SK-N-SH (cell line): ENCODE measurements at regions of chr10 and their contacts with region 1.

Region 1: DNA sequence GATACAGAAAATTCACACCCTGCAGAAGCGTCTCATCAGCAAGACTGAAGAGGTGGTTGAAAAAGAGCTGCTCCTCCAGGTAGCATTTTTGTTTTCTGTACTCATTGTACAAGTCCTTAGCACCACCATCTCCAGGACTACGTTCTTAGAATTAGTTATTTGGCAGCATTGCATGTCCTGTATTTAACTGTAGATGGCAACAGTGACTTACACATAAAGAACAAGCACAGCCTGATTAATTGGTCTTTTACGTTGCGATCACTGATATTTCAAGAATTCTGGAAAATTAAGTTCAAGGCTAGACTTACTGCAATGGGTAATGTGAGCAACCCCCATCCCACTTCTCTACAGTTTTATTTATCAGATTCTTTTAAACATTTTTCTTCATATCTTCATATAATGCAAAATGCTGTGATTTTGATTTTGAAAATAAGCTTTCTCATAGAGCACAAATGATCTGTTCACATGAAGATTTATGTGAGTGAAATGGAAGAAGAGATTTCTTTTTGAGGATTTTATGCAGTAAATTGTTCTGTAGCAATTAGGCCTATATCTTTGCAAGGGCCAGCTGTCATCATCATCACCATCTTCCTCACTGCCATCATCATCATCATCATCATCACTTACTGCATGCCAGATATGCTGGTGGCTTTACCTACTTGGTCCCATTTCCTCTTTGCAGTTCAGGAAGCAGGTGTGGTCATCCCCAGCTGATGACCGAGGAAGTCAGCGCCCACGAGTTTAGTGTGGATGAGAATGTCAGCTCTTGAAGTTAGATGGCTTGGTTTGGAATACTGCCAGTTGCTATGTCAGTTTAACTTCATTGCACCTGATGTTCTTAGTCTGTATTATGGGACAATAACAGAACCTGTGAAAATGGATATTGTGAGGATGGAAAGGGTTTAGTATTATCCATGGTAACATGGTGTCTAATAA is 53.4 kb downstream of the CFAP58 start:
- DNase-seq: peak; percentile 44
- H3K4me3 ChIP-seq: no peak overlapping the region; a peak in 1 of 4 replicates
- H3K27ac ChIP-seq: no peak overlapping the region
- H3K4me1 ChIP-seq: no peaks in the 10 kb centered on the region; a peak in 1 of 4 replicates
- H3K27me3 ChIP-seq: no peaks in the 10 kb centered on the region
- CTCF ChIP-seq: peak; percentile 84
- EP300 ChIP-seq: no peak
- RAD21 ChIP-seq: peak; percentile 93

Region 2: DNA sequence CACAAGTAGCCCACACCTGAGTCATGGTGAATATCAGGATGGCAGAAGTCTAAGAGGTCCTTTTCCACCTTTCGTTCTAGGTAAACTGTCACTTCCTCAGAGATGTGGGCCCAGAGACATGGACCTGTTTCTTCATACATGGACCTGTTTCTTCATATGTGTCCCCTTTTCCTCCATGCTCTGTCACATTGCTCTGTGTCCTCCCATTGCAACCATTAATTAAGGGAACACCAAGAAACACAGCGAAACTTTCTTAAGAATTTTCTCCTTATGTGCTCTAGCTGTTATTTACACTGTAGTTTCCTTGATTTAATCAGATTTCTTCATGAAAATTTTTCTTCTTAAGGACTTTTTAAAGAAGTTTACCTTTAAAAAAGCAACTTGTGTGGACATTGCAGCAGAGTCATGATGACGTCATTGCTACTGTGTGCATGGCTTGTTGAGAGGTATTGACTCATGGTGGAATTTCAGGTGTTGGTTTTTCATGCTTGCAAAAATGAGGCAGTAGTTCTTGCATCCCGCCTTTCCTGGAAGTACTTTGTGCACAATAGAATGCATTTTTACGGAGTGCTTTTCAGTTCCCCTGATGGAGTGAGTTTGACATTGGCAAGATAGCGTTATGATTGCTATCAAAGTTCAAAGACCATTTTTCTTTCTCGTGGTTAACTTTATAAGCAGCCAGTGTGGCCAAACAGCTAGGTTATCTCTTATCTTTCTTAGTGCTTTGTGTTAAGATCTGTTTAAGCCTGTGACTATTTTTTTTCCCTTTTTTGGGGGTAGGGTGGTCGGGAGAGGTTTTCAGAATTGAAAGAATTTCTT is 15.6 kb before region 1 on chr10:
- CTCF ChIA-PET with region 1: interaction called, 38 read pairs
- POLR2A ChIA-PET with region 1: no interaction called
- DNase-seq: no peak
- H3K4me3 ChIP-seq: no peak overlapping the region
- H3K27ac ChIP-seq: no peak overlapping the region
- H3K4me1 ChIP-seq: no peaks in the 10 kb centered on the region; a peak in 2 of 4 replicates
- H3K27me3 ChIP-seq: no peaks in the 10 kb centered on the region
- CTCF ChIP-seq: no peak
- EP300 ChIP-seq: no peak
- RAD21 ChIP-seq: no peak

Region 3: DNA sequence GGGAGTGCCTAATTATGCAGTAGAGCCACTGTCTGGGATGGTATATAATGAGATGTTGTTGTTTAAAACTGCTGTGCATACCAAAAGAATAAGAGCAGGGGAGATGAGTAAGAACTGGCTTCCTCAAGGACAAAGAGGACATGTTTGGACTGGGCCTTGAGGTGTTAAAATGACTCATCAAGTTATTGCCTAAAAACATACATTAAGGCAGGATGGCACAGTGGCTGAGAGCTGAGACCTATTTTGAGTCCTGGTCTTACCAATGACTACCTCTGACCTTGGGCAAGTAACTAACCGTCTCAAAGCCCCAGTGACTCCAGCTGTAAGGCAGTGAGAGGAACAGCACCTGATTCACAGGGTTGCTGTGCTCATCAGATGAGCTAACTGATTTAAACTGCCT is 17.7 kb after region 1 on chr10:
- CTCF ChIA-PET with region 1: interaction called, 17 read pairs
- POLR2A ChIA-PET with region 1: no interaction called
- DNase-seq: no peak
- H3K4me3 ChIP-seq: no peak overlapping the region
- H3K27ac ChIP-seq: no peak overlapping the region
- H3K4me1 ChIP-seq: no peaks in the 10 kb centered on the region
- H3K27me3 ChIP-seq: no peaks in the 10 kb centered on the region
- CTCF ChIP-seq: no peak
- EP300 ChIP-seq: no peak
- RAD21 ChIP-seq: no peak

Region 4: GRCh38 chr10:104509981-104510380 is 103.0 kb after region 1 on chr10:
- CTCF ChIA-PET with region 1: interaction called, 11 read pairs
- POLR2A ChIA-PET with region 1: no interaction called
- DNase-seq: no peak
- H3K4me3 ChIP-seq: no peak overlapping the region
- H3K27ac ChIP-seq: no peak overlapping the region
- H3K4me1 ChIP-seq: peaks cover 0 to 2% of the 10 kb centered on the region in 2 experiments; a peak in 1 of 4 replicates
- H3K27me3 ChIP-seq: no peaks in the 10 kb centered on the region
- CTCF ChIP-seq: no peak
- EP300 ChIP-seq: no peak
- RAD21 ChIP-seq: no peak

Region 5: GRCh38 chr10:104589871-104590270 is 182.9 kb after region 1 on chr10:
- CTCF ChIA-PET with region 1: interaction called, 12 read pairs
- POLR2A ChIA-PET with region 1: no interaction called
- DNase-seq: no peak
- H3K4me3 ChIP-seq: no peak overlapping the region
- H3K27ac ChIP-seq: peak overlapping the region in 1 of 2 experiments; percentile 83; a peak in 2 of 4 replicates
- H3K4me1 ChIP-seq: peaks cover 12 to 19% of the 10 kb centered on the region in 2 experiments; a peak in 3 of 4 replicates
- H3K27me3 ChIP-seq: no peaks in the 10 kb centered on the region
- CTCF ChIP-seq: no peak
- EP300 ChIP-seq: no peak; a peak in 1 of 4 replicates
- RAD21 ChIP-seq: no peak

Region 6: DNA sequence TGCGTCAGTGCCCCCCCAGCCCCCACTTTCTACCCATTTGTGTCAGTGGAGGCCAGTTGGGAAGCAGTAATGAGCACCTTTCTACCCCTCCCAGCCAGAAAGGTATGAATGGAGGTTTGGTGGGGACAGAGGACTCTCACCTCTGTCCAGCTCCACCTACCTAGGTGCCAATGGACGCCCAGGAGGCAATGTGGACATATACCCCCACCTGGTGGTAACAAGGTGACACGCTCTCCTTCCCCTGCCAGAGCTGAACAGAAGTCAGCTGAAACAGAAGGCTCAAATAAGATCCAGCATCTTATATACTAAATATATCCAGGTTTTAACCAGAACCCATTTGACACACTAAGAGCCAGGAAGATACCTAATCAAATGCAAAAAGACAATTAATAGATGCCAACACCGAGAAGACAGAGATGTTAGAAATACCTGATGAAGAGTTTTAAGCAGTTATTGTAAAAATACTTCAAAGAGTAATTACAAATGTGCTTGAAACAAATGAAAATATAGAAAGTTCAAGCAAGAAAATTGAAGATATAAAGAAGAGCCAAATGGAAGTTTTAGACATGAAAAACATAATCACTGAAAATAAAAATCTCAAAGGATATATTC is 215.7 kb after region 1 on chr10:
- CTCF ChIA-PET with region 1: interaction called, 83 read pairs
- POLR2A ChIA-PET with region 1: interaction called, 4 read pairs
- DNase-seq: peak; percentile 62
- H3K4me3 ChIP-seq: no peak overlapping the region
- H3K27ac ChIP-seq: no peak overlapping the region
- H3K4me1 ChIP-seq: no peaks in the 10 kb centered on the region
- H3K27me3 ChIP-seq: no peaks in the 10 kb centered on the region; the same call in 1 of the 2 replicates
- CTCF ChIP-seq: peak; percentile 58
- EP300 ChIP-seq: no peak
- RAD21 ChIP-seq: peak; percentile 82

Region 7: GRCh38 chr10:104925232-104925851 is 518.4 kb after region 1 on chr10:
- CTCF ChIA-PET with region 1: interaction called, 13 read pairs
- POLR2A ChIA-PET with region 1: no interaction called
- DNase-seq: peak; percentile 47
- H3K4me3 ChIP-seq: peak overlapping the region in 1 of 2 experiments; percentile 43; a peak in 1 of 4 replicates
- H3K27ac ChIP-seq: no peak overlapping the region
- H3K4me1 ChIP-seq: no peaks in the 10 kb centered on the region
- H3K27me3 ChIP-seq: no peaks in the 10 kb centered on the region
- CTCF ChIP-seq: peak; percentile 42
- EP300 ChIP-seq: no peak
- RAD21 ChIP-seq: peak; percentile 73

Region 8: GRCh38 chr10:105585707-105586106 is 1178.7 kb after region 1 on chr10:
- CTCF ChIA-PET with region 1: no interaction called
- POLR2A ChIA-PET with region 1: no interaction called
- DNase-seq: no peak
- H3K4me3 ChIP-seq: no peak overlapping the region
- H3K27ac ChIP-seq: no peak overlapping the region
- H3K4me1 ChIP-seq: no peaks in the 10 kb centered on the region
- H3K27me3 ChIP-seq: no peaks in the 10 kb centered on the region
- CTCF ChIP-seq: no peak
- EP300 ChIP-seq: no peak
- RAD21 ChIP-seq: no peak